PC-3 (cell line): ENCODE measurements at regions of chr4 and their contacts with region 1.

Region 1: DNA sequence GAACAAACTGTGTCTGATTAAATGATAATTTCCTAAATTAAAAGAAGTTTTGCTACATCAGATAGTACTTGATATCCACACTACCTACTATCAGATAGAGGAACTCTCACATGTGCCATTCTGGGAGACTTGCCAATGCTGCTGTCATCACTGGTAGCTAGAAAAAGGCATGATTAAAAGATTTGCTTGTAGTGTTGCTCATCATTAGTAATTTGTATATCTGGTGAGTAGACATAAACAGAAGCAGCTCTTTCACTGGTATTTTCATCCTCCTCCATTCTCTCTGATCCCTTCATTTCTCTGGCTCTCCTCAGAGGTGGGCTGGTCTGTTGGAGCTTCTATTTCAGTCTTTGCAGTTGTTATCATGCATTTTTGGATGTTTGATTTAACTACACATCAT is 56.0 kb downstream of the SPRY1 start:
- DNase-seq: peak; percentile 90
- ATAC-seq: peak; percentile 30
- H3K4me3 ChIP-seq: no peak overlapping the region
- H3K27ac ChIP-seq: peak overlapping the region; percentile 46
- H3K4me1 ChIP-seq: peaks cover 36% of the 10 kb centered on the region
- H3K27me3 ChIP-seq: no peaks in the 10 kb centered on the region
- CTCF ChIP-seq: no peak

Region 2: GRCh38 chr4:123217664-123218063 is 235.0 kb before region 1 on chr4:
- CTCF ChIA-PET with region 1: no interaction called
- POLR2A ChIA-PET with region 1: no interaction called
- intact Hi-C with region 1: no loop called
- DNase-seq: no peak
- ATAC-seq: no peak
- H3K4me3 ChIP-seq: no peak overlapping the region
- H3K27ac ChIP-seq: no peak overlapping the region
- H3K4me1 ChIP-seq: no peaks in the 10 kb centered on the region
- H3K27me3 ChIP-seq: no peaks in the 10 kb centered on the region
- CTCF ChIP-seq: no peak

Region 3: DNA sequence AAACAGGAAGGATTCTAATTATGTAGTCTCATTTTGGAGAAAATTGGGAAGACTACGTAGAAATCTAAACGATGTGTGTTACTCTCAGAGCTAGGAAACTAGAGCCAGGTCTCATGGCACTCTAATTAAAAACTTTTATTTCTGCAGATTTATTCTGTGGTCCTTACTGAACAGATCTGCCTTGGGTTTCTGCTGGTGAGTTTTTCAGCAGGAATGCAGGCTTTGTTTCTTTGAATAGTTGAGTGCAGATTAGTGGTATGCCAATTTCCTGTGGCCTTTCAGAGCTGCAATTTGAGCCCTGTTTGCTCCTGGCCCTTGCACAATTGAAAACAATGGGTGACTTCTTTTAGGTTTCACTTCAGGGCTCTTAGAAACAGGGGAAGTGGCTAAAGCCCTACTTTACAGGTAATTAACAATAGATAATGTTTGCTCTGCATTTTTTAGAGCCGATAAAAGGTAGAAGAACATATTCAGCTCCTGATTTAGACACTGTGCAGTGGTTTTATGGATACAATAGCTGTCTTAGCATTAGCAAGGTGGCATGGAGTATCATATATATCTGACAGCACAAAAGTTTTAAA is 34.2 kb before region 1 on chr4:
- CTCF ChIA-PET with region 1: no interaction called
- POLR2A ChIA-PET with region 1: interaction called, 3 read pairs
- intact Hi-C with region 1: loop called (anchors 1 kb)
- DNase-seq: peak; percentile 88
- ATAC-seq: peak; percentile 83
- H3K4me3 ChIP-seq: peak overlapping the region; percentile 33; the same call in 1 of the 2 replicates
- H3K27ac ChIP-seq: peak overlapping the region; percentile 95
- H3K4me1 ChIP-seq: peaks cover 68% of the 10 kb centered on the region
- H3K27me3 ChIP-seq: no peaks in the 10 kb centered on the region
- CTCF ChIP-seq: no peak

Region 4: DNA sequence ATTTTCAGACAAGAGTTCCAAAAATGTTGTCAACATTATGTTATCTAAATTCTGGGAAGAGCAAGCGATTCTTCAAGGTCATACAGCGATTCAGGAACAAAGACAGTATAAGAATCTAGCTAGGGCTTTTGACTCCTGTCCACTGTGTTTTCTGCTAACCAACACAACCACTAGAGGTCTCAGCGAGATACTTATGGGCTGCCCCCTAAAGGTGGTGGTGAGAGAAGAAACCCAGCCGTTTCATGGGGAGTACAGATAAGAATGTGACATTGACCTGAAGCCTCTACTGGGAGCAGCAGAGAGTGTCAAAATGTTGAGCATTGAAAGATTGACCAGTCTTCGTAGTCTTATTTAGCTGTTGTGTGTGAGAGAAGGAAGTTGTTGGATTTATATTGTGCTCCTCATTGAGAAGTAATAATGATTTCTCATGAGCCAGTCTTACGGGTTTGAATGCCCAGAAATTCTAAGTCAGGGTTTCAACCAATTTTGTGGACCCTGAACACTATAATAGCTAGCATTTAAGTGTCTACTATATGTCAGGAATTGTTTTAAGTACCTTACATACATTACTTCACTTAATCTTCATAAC is 112.2 kb after region 1 on chr4:
- CTCF ChIA-PET with region 1: no interaction called
- POLR2A ChIA-PET with region 1: no interaction called
- intact Hi-C with region 1: loop called (anchors 5 kb)
- DNase-seq: peak; percentile 78
- ATAC-seq: peak; percentile 80
- H3K4me3 ChIP-seq: no peak overlapping the region
- H3K27ac ChIP-seq: no peak overlapping the region
- H3K4me1 ChIP-seq: peaks cover 27% of the 10 kb centered on the region
- H3K27me3 ChIP-seq: no peaks in the 10 kb centered on the region
- CTCF ChIP-seq: peak; percentile 96